CD14-positive monocyte (primary cell): ENCODE measurements at regions of chr14 and their contacts with region 1.

Region 1: GRCh38 chr14:34498684-34499412 is 36.8 kb upstream of the SPTSSA start:
- DNase-seq: peak; percentile 2 to 28 (median 24)
- H3K4me3 ChIP-seq: no peak overlapping the region
- H3K4me3 Mint-ChIP-seq: no peak overlapping the region
- H3K27ac ChIP-seq: no peak overlapping the region
- H3K27ac Mint-ChIP-seq: no peak overlapping the region
- H3K4me1 ChIP-seq: peaks cover 11 to 14% of the 10 kb centered on the region in 2 donors
- H3K4me1 Mint-ChIP-seq: peaks cover 11% of the 10 kb centered on the region
- H3K27me3 ChIP-seq: no peaks in the 10 kb centered on the region
- H3K27me3 Mint-ChIP-seq: no peaks in the 10 kb centered on the region
- CTCF ChIP-seq: peak; percentile 63

Region 2: GRCh38 chr14:34331728-34332623 is 166.9 kb before region 1 on chr14:
- intact Hi-C with region 1: loop called (anchors 1 to 2 kb)
- DNase-seq: peak; percentile 40 to 56 (median 50)
- H3K4me3 ChIP-seq: no peak overlapping the region
- H3K4me3 Mint-ChIP-seq: no peak overlapping the region
- H3K27ac ChIP-seq: no peak overlapping the region
- H3K27ac Mint-ChIP-seq: no peak overlapping the region
- H3K4me1 ChIP-seq: peaks cover 5 to 12% of the 10 kb centered on the region in 2 donors
- H3K4me1 Mint-ChIP-seq: peaks cover 12% of the 10 kb centered on the region
- H3K27me3 ChIP-seq: no peaks in the 10 kb centered on the region
- H3K27me3 Mint-ChIP-seq: peaks cover 0 to 1% (median 0%) of the 10 kb centered on the region in 3 donors
- CTCF ChIP-seq: peak; percentile 90